ENCODE measurements at regions of chr22 and their contacts with region 1.

Region 1: GRCh38 chr22:38181453-38182247 is at the start of gene PLA2G6:
- DNase-seq: peak; percentile 92 to 98 (median 96)
- ATAC-seq: peak; percentile 87
- H3K4me3 ChIP-seq: peak within 1 kb of the TSS; percentile 69 to 92
- H3K4me3 Mint-ChIP-seq: peak within 1 kb of the TSS; percentile 93
- H3K27ac ChIP-seq: peak within 1 kb of the TSS; percentile 18 to 90
- H3K27ac Mint-ChIP-seq: peak within 1 kb of the TSS; percentile 88
- H3K4me1 ChIP-seq: peaks cover 25% of the 10 kb centered on the region
- H3K4me1 Mint-ChIP-seq: peaks cover 49% of the 10 kb centered on the region
- H3K27me3 ChIP-seq: no peaks in the 10 kb centered on the region
- H3K27me3 Mint-ChIP-seq: no peaks in the 10 kb centered on the region
- CTCF ChIP-seq: no peak
- total RNA-seq, gene PLA2G6: 35.4 to 44.4 TPM

Region 2: DNA sequence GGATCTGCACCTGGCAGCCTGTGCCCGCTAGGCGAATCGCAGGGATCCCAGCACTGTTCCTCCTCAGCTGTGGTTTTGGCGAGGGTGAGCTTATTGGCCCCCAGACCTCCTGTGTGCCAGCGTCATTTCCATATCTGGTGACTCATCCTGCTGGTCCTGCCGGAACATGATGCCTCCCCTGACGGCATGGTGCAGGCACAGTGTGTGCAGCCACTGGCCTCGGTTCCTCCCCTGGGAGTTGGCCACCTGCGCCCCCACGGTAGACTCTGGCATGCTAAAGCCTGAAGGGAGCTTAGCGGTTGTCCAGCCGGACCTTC is 181.7 kb before region 1 on chr22:
- CTCF ChIA-PET with region 1: no interaction called
- POLR2A ChIA-PET with region 1: no interaction called
- intact Hi-C with region 1: no loop called
- DNase-seq: peak in 2 of 9 experiments; percentile 41 to 50
- ATAC-seq: peak; percentile 57
- H3K4me3 ChIP-seq: no peak overlapping the region
- H3K4me3 Mint-ChIP-seq: no peak overlapping the region
- H3K27ac ChIP-seq: no peak overlapping the region
- H3K27ac Mint-ChIP-seq: no peak overlapping the region
- H3K4me1 ChIP-seq: peaks cover 31% of the 10 kb centered on the region
- H3K4me1 Mint-ChIP-seq: peaks cover 24% of the 10 kb centered on the region
- H3K27me3 ChIP-seq: no peaks in the 10 kb centered on the region
- H3K27me3 Mint-ChIP-seq: no peaks in the 10 kb centered on the region
- CTCF ChIP-seq: no peak

Region 3: DNA sequence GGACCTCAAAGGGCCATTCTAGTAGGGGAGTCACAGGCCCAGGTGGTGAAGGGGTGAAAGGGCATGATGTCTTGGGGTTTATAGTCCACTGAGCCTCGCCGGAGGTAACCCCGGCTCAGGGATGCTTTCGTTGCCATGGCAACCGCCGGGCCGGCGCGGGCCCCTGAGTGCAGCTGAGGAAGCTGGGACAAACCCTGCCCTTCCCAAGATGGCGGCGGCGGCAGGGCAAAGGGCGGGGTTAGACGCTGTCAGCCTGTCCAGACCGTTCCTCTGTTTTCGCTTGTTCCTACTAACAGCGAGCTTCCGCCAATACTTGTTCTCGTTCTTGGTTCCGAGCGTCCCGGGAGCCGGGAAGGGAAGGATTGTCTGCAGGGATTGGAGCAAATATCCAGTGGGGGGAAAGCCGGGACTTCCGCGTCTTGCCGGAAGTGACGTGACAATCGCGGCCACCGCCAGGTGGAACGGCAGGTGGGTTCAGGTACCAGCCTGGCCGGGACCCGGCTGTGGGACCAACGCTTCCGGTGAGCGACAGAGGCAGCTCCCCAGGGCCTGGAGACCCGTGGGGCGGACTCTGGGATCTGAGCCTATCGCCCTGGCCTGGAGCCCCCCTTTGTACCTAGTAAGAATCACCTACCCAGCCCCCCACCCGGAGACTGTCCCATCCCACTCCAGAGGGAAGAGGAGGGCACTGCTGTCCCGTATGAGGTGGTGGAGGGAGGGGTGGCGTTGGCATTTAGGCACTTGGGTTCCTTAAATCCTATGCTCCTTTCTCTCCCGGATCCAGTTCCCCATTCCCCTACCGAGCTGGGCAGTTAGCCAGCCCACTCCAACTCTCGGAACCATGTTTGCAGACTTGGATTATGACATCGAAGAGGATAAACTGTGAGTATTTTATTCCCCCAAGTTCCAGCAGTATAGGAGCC is 124.4 kb before region 1 on chr22 and contains the start of gene PICK1:
- CTCF ChIA-PET with region 1: no interaction called
- POLR2A ChIA-PET with region 1: no interaction called
- intact Hi-C with region 1: loop called in 1 of 2 experiments (anchors 5 kb)
- DNase-seq: peak; percentile 56 to 89 (median 77)
- ATAC-seq: peak; percentile 80
- H3K4me3 ChIP-seq: peak within 1 kb of the TSS; percentile 83 to 97
- H3K4me3 Mint-ChIP-seq: peak within 1 kb of the TSS; percentile 98
- H3K27ac ChIP-seq: peak within 1 kb of the TSS; percentile 79 to 91
- H3K27ac Mint-ChIP-seq: peak within 1 kb of the TSS; percentile 98
- H3K4me1 ChIP-seq: peaks cover 15% of the 10 kb centered on the region
- H3K4me1 Mint-ChIP-seq: peaks cover 19% of the 10 kb centered on the region
- H3K27me3 ChIP-seq: no peaks in the 10 kb centered on the region
- H3K27me3 Mint-ChIP-seq: no peaks in the 10 kb centered on the region
- CTCF ChIP-seq: no peak
- total RNA-seq, gene PICK1: 23.1 to 24.8 TPM

Region 4: GRCh38 chr22:38069372-38070249 is 112.0 kb before region 1 on chr22:
- CTCF ChIA-PET with region 1: no interaction called
- POLR2A ChIA-PET with region 1: no interaction called
- intact Hi-C with region 1: no loop called
- DNase-seq: no peak
- ATAC-seq: no peak
- H3K4me3 ChIP-seq: no peak overlapping the region
- H3K4me3 Mint-ChIP-seq: no peak overlapping the region
- H3K27ac ChIP-seq: no peak overlapping the region
- H3K27ac Mint-ChIP-seq: no peak overlapping the region
- H3K4me1 ChIP-seq: no peaks in the 10 kb centered on the region
- H3K4me1 Mint-ChIP-seq: no peaks in the 10 kb centered on the region
- H3K27me3 ChIP-seq: no peaks in the 10 kb centered on the region
- H3K27me3 Mint-ChIP-seq: no peaks in the 10 kb centered on the region
- CTCF ChIP-seq: no peak

Region 5: GRCh38 chr22:38214256-38215056 is 32.8 kb after region 1 on chr22:
- CTCF ChIA-PET with region 1: no interaction called
- POLR2A ChIA-PET with region 1: interaction called, 6 read pairs
- intact Hi-C with region 1: loop called in 1 of 2 experiments (anchors 1 kb)
- DNase-seq: peak; percentile 49 to 85 (median 69)
- ATAC-seq: peak; percentile 82
- H3K4me3 ChIP-seq: peak overlapping the region; percentile 24 to 30
- H3K4me3 Mint-ChIP-seq: peak overlapping the region; percentile 54
- H3K27ac ChIP-seq: no peak overlapping the region
- H3K27ac Mint-ChIP-seq: no peak overlapping the region
- H3K4me1 ChIP-seq: peaks cover 6% of the 10 kb centered on the region
- H3K4me1 Mint-ChIP-seq: peaks cover 16% of the 10 kb centered on the region
- H3K27me3 ChIP-seq: no peaks in the 10 kb centered on the region
- H3K27me3 Mint-ChIP-seq: no peaks in the 10 kb centered on the region
- CTCF ChIP-seq: no peak

Region 6: GRCh38 chr22:38272373-38273134 is 90.9 kb after region 1 on chr22 and contains the start of gene TMEM184B:
- CTCF ChIA-PET with region 1: no interaction called
- POLR2A ChIA-PET with region 1: no interaction called
- intact Hi-C with region 1: loop called (anchors 5 kb)
- DNase-seq: peak; percentile 62 to 93 (median 78)
- ATAC-seq: peak; percentile 94
- H3K4me3 ChIP-seq: peak within 1 kb of the TSS; percentile 70 to 77
- H3K4me3 Mint-ChIP-seq: peak within 1 kb of the TSS; percentile 92
- H3K27ac ChIP-seq: peak within 1 kb of the TSS; percentile 59 to 93
- H3K27ac Mint-ChIP-seq: peak within 1 kb of the TSS; percentile 95
- H3K4me1 ChIP-seq: peaks cover 31% of the 10 kb centered on the region
- H3K4me1 Mint-ChIP-seq: peaks cover 50% of the 10 kb centered on the region
- H3K27me3 ChIP-seq: no peaks in the 10 kb centered on the region
- H3K27me3 Mint-ChIP-seq: peaks cover 3% of the 10 kb centered on the region
- CTCF ChIP-seq: no peak
- total RNA-seq, gene TMEM184B: 53.0 TPM

Measured in CD8-positive, alpha-beta T cell (primary cell).